ENCODE measurements at regions of chr1 and their contacts with region 1.

Region 1: DNA sequence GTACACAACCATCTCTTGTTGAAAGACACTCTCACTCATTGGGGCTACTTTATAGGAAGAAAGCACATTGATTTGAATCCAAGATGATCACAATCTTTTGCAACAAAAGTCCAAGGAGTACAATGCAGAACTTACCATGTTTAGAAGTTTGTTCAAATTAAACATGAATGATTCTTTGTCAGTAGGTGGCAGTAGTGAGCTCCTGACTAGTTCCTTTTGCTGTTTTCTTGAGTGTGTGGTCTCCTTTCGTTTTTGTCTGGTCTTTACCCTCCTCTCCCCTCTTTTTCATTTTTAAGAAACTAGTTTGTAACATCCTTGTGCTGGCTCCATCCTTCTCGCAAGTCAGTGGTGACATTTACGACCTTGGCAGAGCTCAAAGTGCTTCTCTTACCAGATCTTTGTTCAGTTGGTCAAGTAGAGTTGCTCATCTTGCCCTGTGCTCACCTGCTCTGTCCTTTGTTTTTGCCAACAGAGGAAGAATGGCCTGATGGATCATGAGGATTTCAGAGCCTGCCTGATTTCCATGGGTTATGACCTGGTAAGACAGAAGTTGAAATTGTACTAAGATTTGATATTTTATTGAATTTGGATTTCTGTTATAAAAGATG is 35.7 kb upstream of the MTR start:
- DNase-seq: no peak
- H3K4me3 Mint-ChIP-seq: no peak overlapping the region
- H3K27ac Mint-ChIP-seq: no peak overlapping the region
- H3K4me1 Mint-ChIP-seq: peaks cover 4% of the 10 kb centered on the region
- H3K27me3 Mint-ChIP-seq: no peaks in the 10 kb centered on the region

Region 2: DNA sequence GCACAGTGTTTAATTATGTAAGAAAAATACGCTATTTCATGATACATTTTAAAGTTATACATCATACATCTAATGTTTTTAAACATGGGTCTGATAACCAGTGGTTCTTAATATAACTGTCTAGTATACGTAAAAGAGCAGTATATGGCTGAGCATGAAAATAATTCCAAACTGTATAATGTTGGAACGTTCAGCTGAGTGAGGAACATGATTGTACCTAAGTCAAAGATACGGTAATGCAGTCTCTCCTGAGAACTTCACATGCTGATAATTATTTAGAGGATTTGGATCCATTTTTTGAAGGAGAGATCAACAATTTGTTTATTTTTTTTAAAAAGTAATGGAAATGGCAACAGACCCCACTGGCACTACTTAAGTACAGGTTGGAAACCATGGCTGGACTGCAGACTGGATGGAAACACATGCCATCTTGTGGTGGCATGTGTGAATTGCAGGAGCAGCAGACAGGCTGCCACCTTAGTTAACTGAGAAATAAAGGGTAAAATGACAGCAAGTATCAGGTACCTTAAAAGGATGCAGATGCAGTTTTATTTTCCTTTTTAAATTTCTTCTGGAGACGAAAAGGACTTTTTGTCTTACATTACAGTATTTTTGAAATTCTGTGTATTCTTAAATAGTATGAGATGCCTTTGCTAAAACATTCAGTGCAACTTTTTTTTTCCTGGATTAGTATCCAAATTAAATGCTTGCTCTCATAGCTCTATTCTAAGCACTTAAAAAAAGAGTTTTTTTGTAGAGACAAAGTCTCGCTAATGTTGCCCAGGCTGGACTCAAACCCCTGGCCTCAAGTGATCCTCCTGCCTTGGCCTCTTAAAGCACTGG is 109.5 kb after region 1 on chr1:
- CTCF ChIA-PET with region 1: interaction called, 26 read pairs
- DNase-seq: peak; percentile 60
- H3K4me3 Mint-ChIP-seq: no peak overlapping the region
- H3K27ac Mint-ChIP-seq: no peak overlapping the region
- H3K4me1 Mint-ChIP-seq: no peaks in the 10 kb centered on the region
- H3K27me3 Mint-ChIP-seq: no peaks in the 10 kb centered on the region

Region 3: GRCh38 chr1:237386362-237387143 is 627.2 kb after region 1 on chr1:
- CTCF ChIA-PET with region 1: interaction called, 16 read pairs
- DNase-seq: no peak
- H3K4me3 Mint-ChIP-seq: no peak overlapping the region
- H3K27ac Mint-ChIP-seq: no peak overlapping the region
- H3K4me1 Mint-ChIP-seq: no peaks in the 10 kb centered on the region
- H3K27me3 Mint-ChIP-seq: no peaks in the 10 kb centered on the region

Region 4: GRCh38 chr1:237562242-237562823 is 803.0 kb after region 1 on chr1:
- CTCF ChIA-PET with region 1: interaction called, 12 read pairs
- DNase-seq: no peak
- H3K4me3 Mint-ChIP-seq: no peak overlapping the region
- H3K27ac Mint-ChIP-seq: no peak overlapping the region
- H3K4me1 Mint-ChIP-seq: no peaks in the 10 kb centered on the region
- H3K27me3 Mint-ChIP-seq: no peaks in the 10 kb centered on the region

Measured in activated naive CD4-positive, alpha-beta T cell treated with anti-CD3 and anti-CD28 coated beads, Interleukin-2, amount 10 ng/mL, durations not matched to agents 7 days and 5 days (primary cell).